IMR-90 (cell line): ENCODE measurements at regions of chr6 and their contacts with region 1.

Region 1: GRCh38 chr6:13992417-13993055 is 67.8 kb downstream of the RNF182 start:
- DNase-seq: peak; percentile 86
- ATAC-seq: peak; percentile 87
- H3K4me3 ChIP-seq: no peak overlapping the region
- H3K27ac ChIP-seq: no peak overlapping the region
- H3K4me1 ChIP-seq: peaks cover 2% of the 10 kb centered on the region; the same call in 1 of the 2 replicates
- H3K27me3 ChIP-seq: no peaks in the 10 kb centered on the region
- CTCF ChIP-seq: no peak
- POLR2A ChIP-seq: no peak
- RAD21 ChIP-seq: no peak

Region 2: GRCh38 chr6:13965582-13966127 is 26.9 kb before region 1 on chr6:
- CTCF ChIA-PET with region 1: interaction called, 4 read pairs
- POLR2A ChIA-PET with region 1: no interaction called
- dilution Hi-C with region 1: no loop called
- in situ Hi-C with region 1: no loop called
- intact Hi-C with region 1: loop called (anchors 2 kb)
- DNase-seq: no peak
- ATAC-seq: no peak
- H3K4me3 ChIP-seq: no peak overlapping the region
- H3K27ac ChIP-seq: no peak overlapping the region
- H3K4me1 ChIP-seq: no peaks in the 10 kb centered on the region
- H3K27me3 ChIP-seq: no peaks in the 10 kb centered on the region
- CTCF ChIP-seq: no peak
- POLR2A ChIP-seq: no peak
- RAD21 ChIP-seq: no peak